T-cell (primary cell): ENCODE measurements at regions of chr14 and their contacts with region 1.

Region 1: GRCh38 chr14:21092273-21093011 is 6.0 kb downstream of the ZNF219 start:
- DNase-seq: peak; percentile 72 to 97 (median 89)
- ATAC-seq: peak; percentile 58 to 95 (median 87)
- H3K4me3 ChIP-seq: no peak overlapping the region
- H3K4me3 Mint-ChIP-seq: no peak overlapping the region
- H3K27ac ChIP-seq: no peak overlapping the region
- H3K27ac Mint-ChIP-seq: no peak overlapping the region
- H3K4me1 ChIP-seq: peaks cover 3 to 27% of the 10 kb centered on the region in 2 experiments
- H3K4me1 Mint-ChIP-seq: peaks cover 22 to 34% (median 28%) of the 10 kb centered on the region in 3 donors
- H3K27me3 ChIP-seq: no peaks in the 10 kb centered on the region
- H3K27me3 Mint-ChIP-seq: no peaks in the 10 kb centered on the region

Region 2: GRCh38 chr14:21071225-21072030 is 21.0 kb before region 1 on chr14:
- CTCF ChIA-PET with region 1: interaction called, 24 to 50 read pairs
- POLR2A ChIA-PET with region 1: interaction called in 1 of 2 experiments, 3 read pairs
- DNase-seq: peak in 13 of 35 experiments; percentile 8 to 53 (median 30)
- ATAC-seq: peak; percentile 31 to 44 (median 40)
- H3K4me3 ChIP-seq: peak overlapping the region; percentile 46 to 63
- H3K4me3 Mint-ChIP-seq: peak overlapping the region; percentile 74 to 84 (median 76)
- H3K27ac ChIP-seq: no peak overlapping the region
- H3K27ac Mint-ChIP-seq: no peak overlapping the region
- H3K4me1 ChIP-seq: peaks cover 7 to 35% of the 10 kb centered on the region in 2 experiments
- H3K4me1 Mint-ChIP-seq: peaks cover 29 to 41% (median 38%) of the 10 kb centered on the region in 3 donors
- H3K27me3 ChIP-seq: peaks cover 7 to 68% of the 10 kb centered on the region in 2 experiments
- H3K27me3 Mint-ChIP-seq: peaks cover 54 to 64% of the 10 kb centered on the region in 2 donors